ENCODE measurements at regions of chr2 and their contacts with region 1.

Region 1: GRCh38 chr2:144414324-144414845 is 105.5 kb downstream of the ZEB2 start:
- DNase-seq: no peak
- H3K4me3 Mint-ChIP-seq: peak overlapping the region; percentile 12
- H3K27ac Mint-ChIP-seq: peak overlapping the region; percentile 55
- H3K4me1 Mint-ChIP-seq: peaks cover 18% of the 10 kb centered on the region
- H3K27me3 Mint-ChIP-seq: no peaks in the 10 kb centered on the region

Region 2: DNA sequence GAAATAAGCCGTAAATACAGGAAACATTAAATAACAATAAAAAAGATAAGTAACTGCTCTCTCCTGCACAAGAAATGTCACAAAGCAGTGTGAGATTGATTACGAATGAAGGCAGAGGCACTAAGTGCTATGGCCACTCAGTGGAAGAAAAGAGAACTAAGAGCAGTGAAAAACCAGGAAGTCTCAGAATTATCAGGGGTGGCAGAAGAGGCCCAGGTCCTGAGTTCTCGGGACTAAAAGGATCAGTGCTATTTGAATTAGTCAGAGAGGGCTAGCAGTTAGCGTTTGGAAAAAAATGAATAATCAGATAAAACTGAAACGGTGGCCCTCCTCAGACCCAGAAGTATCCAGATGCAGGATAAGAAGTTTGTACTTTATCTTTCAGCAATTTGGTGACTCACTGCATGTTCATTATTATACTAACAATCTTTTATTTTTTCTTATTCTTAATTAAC is 261.5 kb before region 1 on chr2:
- intact Hi-C with region 1: no loop called
- DNase-seq: no peak
- H3K4me3 Mint-ChIP-seq: no peak overlapping the region
- H3K27ac Mint-ChIP-seq: no peak overlapping the region
- H3K4me1 Mint-ChIP-seq: no peaks in the 10 kb centered on the region
- H3K27me3 Mint-ChIP-seq: no peaks in the 10 kb centered on the region

Region 3: DNA sequence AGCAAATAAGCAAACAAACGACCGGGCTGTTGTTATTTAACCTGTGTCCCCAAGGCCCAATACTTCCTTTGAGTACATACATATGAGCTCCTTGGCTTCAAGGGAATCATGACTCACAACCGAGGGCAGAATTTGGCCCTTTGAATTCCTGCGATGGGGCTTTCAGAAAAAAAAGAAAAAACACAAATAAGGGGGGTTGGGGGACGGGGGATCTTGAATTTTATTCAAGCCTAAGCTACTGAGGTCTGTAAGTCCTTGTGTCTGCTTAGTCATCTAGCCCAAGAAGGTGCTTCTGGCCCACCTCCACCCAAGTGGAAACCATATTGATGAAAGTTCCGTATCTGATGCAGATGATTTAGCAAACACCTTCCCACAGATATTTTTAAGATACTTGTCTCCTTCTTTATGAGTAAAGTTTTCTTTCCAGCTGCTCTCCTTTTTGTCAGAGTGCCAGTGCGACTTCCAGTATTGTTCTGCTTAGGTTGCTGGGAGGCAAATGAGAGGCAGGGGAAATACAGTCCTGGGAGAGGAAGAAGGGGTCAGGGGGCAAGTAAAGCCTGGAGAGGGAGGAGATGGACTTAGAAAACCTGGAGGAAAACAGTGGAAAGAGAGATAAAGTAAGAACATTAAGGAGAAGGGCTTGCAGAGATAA is 64.1 kb before region 1 on chr2:
- intact Hi-C with region 1: loop called (anchors 1 kb)
- DNase-seq: no peak
- H3K4me3 Mint-ChIP-seq: peak overlapping the region; percentile 28
- H3K27ac Mint-ChIP-seq: peak overlapping the region; percentile 84
- H3K4me1 Mint-ChIP-seq: peaks cover 20% of the 10 kb centered on the region
- H3K27me3 Mint-ChIP-seq: peaks cover 1% of the 10 kb centered on the region

Region 4: DNA sequence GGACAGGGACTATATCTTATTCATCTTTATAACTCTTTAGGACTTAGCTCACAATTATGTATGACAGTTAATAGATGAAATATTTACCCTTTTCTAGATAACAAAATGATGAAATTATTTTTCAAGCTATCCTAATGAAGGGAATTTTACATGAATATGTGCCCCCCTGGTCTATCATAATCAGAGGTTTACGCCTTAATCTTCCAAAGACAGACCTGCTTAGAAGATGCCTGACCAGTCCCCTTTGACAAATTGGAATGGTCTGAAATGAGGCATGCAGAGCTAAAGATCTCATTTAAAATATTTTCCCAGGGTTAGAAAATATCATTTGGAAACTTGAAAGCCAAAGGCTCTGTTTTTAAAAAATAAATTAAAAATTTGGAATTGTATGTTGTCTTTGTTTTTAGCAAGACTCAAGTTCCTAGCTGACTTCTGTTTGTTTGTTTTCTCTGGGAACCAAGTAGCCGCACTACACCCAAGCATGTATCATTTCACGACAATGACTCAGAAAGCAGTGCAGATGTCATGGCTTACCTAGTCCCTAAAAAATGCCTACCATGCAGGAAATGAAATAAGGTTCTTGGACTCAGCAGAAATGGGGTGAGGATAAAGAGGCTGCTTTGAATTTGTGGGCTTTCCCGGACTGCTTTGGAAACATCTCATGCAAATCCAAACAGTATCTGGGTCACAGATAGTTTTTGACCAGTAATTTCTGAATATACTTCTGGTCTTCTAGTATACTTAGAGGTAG is 56.6 kb before region 1 on chr2:
- intact Hi-C with region 1: loop called (anchors 1 kb)
- DNase-seq: peak; percentile 66
- H3K4me3 Mint-ChIP-seq: peak overlapping the region; percentile 9
- H3K27ac Mint-ChIP-seq: peak overlapping the region; percentile 68
- H3K4me1 Mint-ChIP-seq: peaks cover 16% of the 10 kb centered on the region
- H3K27me3 Mint-ChIP-seq: no peaks in the 10 kb centered on the region

Region 5: GRCh38 chr2:144382849-144383248 is 31.5 kb before region 1 on chr2:
- intact Hi-C with region 1: loop called (anchors 1 kb)
- DNase-seq: peak; percentile 74
- H3K4me3 Mint-ChIP-seq: no peak overlapping the region
- H3K27ac Mint-ChIP-seq: peak overlapping the region; percentile 78
- H3K4me1 Mint-ChIP-seq: peaks cover 21% of the 10 kb centered on the region
- H3K27me3 Mint-ChIP-seq: peaks cover 7% of the 10 kb centered on the region

Region 6: DNA sequence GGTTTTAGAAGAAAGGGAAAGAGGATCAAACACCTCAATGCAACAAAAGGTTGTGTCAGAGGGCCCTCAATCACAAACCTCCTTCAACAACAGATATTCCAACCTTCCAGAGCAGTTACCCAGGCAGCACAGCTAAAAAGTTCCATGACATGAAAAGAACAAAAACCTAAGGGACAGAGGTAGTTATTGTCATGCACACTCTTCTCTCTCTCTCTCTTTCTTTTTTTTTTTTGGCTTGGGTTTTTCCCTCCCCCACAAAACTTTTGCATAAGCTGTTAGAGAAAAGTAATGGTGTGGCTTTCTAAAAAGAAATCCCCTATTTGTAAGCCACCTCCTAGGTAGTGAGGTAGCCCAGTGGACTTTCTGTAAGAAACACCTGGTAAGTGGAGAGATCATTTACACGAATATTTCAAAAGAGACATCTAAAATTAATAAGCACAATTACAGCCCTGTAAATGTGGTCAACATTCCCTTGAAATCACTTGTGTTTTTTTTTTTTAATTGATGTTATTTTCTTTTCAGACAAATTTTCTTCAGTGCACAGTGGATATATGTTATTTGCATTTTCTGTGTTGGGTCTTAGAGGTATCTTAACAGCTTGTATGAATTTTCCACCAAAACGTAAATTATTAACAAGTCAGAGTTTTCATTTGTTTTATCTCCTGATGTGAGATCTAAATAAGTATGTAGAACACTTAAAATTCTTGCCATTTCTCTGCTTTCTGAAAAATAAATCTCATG is 57.1 kb after region 1 on chr2:
- intact Hi-C with region 1: loop called (anchors 5 kb)
- DNase-seq: no peak
- H3K4me3 Mint-ChIP-seq: peak overlapping the region; percentile 24
- H3K27ac Mint-ChIP-seq: peak overlapping the region; percentile 72
- H3K4me1 Mint-ChIP-seq: peaks cover 11% of the 10 kb centered on the region
- H3K27me3 Mint-ChIP-seq: peaks cover 1% of the 10 kb centered on the region